CD4-positive, alpha-beta memory T cell (primary cell): ENCODE measurements at regions of chr1 and their contacts with region 1.

Region 1: GRCh38 chr1:152459596-152460528 is 45.8 kb upstream of the CRNN start:
- DNase-seq: peak; percentile 70 to 72 (median 71)
- H3K4me3 ChIP-seq: peak overlapping the region in 1 of 2 donors; percentile 9
- H3K4me3 Mint-ChIP-seq: peak overlapping the region; percentile 61 to 88 (median 80)
- H3K27ac ChIP-seq: peak overlapping the region; percentile 39
- H3K27ac Mint-ChIP-seq: peak overlapping the region; percentile 49 to 97 (median 87)
- H3K4me1 ChIP-seq: peaks cover 15% of the 10 kb centered on the region
- H3K4me1 Mint-ChIP-seq: peaks cover 24 to 36% (median 30%) of the 10 kb centered on the region in 4 donors
- H3K27me3 ChIP-seq: no peaks in the 10 kb centered on the region
- H3K27me3 Mint-ChIP-seq: peaks cover 2 to 4% of the 10 kb centered on the region in 2 donors

Region 2: DNA sequence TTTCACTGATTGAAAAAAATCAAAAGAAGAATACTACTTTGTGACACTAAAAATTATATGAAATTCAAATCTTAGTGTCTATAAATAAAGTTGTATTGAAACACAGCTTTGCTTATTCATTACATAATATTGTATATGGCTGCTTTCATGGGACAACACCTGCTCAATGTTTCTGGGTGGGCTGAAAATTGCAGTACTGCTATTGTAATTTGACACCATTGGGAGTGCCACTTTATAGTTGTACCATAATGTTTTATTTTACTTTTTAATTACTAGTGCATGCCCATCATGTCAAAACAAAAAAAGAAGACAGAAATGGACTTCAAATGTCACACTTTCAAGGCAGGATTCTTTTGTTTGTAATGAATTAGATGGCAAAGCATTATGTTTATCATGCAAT is 284.3 kb before region 1 on chr1:
- CTCF ChIA-PET with region 1: interaction called, 29 read pairs
- POLR2A ChIA-PET with region 1: no interaction called
- intact Hi-C with region 1: no loop called
- DNase-seq: no peak
- H3K4me3 ChIP-seq: no peak overlapping the region
- H3K4me3 Mint-ChIP-seq: no peak overlapping the region
- H3K27ac ChIP-seq: no peak overlapping the region
- H3K27ac Mint-ChIP-seq: no peak overlapping the region
- H3K4me1 ChIP-seq: no peaks in the 10 kb centered on the region
- H3K4me1 Mint-ChIP-seq: no peaks in the 10 kb centered on the region
- H3K27me3 ChIP-seq: no peaks in the 10 kb centered on the region
- H3K27me3 Mint-ChIP-seq: peaks cover 9 to 12% of the 10 kb centered on the region in 2 donors

Region 3: DNA sequence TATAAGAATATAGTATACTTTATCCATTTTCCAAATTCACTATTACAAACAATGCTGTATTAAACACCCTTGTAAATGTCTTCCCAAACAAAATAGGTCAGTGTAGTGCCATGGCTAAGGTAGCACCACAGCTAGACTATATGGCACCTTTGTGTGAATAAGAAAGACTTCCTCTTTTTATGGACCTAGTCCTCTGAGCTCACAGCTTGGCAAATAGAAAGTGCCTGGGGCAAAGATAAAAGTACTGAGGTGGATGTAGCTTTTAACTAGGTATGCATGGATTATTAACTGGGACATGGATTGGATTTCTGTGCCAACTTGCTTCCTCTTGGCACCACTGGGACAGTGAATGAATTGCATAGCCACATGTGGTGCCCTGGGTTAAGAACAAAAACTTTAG is 260.9 kb before region 1 on chr1:
- CTCF ChIA-PET with region 1: interaction called, 13 read pairs
- POLR2A ChIA-PET with region 1: no interaction called
- intact Hi-C with region 1: no loop called
- DNase-seq: no peak
- H3K4me3 ChIP-seq: no peak overlapping the region
- H3K4me3 Mint-ChIP-seq: no peak overlapping the region
- H3K27ac ChIP-seq: no peak overlapping the region
- H3K27ac Mint-ChIP-seq: no peak overlapping the region
- H3K4me1 ChIP-seq: no peaks in the 10 kb centered on the region
- H3K4me1 Mint-ChIP-seq: no peaks in the 10 kb centered on the region
- H3K27me3 ChIP-seq: no peaks in the 10 kb centered on the region
- H3K27me3 Mint-ChIP-seq: peaks cover 9 to 19% of the 10 kb centered on the region in 2 donors

Region 4: GRCh38 chr1:152398812-152399698 is 60.8 kb before region 1 on chr1:
- CTCF ChIA-PET with region 1: interaction called, 89 read pairs
- POLR2A ChIA-PET with region 1: interaction called, 11 read pairs
- intact Hi-C with region 1: loop called (anchors 5 kb)
- DNase-seq: peak in 4 of 5 donors; percentile 13 to 30 (median 16)
- H3K4me3 ChIP-seq: no peak overlapping the region
- H3K4me3 Mint-ChIP-seq: peak overlapping the region in 1 of 8 donors; percentile 43
- H3K27ac ChIP-seq: no peak overlapping the region
- H3K27ac Mint-ChIP-seq: peak overlapping the region in 3 of 7 donors; percentile 1 to 69 (median 5)
- H3K4me1 ChIP-seq: peaks cover 16% of the 10 kb centered on the region
- H3K4me1 Mint-ChIP-seq: peaks cover 14 to 24% (median 22%) of the 10 kb centered on the region in 4 donors
- H3K27me3 ChIP-seq: no peaks in the 10 kb centered on the region
- H3K27me3 Mint-ChIP-seq: peaks cover 3 to 6% of the 10 kb centered on the region in 2 donors

Region 5: GRCh38 chr1:152473887-152474537 is 14.2 kb after region 1 on chr1:
- CTCF ChIA-PET with region 1: interaction called, 22 read pairs
- POLR2A ChIA-PET with region 1: interaction called, 3 read pairs
- intact Hi-C with region 1: no loop called
- DNase-seq: no peak
- H3K4me3 ChIP-seq: no peak overlapping the region
- H3K4me3 Mint-ChIP-seq: no peak overlapping the region
- H3K27ac ChIP-seq: no peak overlapping the region
- H3K27ac Mint-ChIP-seq: no peak overlapping the region
- H3K4me1 ChIP-seq: no peaks in the 10 kb centered on the region
- H3K4me1 Mint-ChIP-seq: peaks cover 0 to 4% (median 0%) of the 10 kb centered on the region in 4 donors
- H3K27me3 ChIP-seq: no peaks in the 10 kb centered on the region
- H3K27me3 Mint-ChIP-seq: peaks cover 5 to 6% of the 10 kb centered on the region in 2 donors

Region 6: DNA sequence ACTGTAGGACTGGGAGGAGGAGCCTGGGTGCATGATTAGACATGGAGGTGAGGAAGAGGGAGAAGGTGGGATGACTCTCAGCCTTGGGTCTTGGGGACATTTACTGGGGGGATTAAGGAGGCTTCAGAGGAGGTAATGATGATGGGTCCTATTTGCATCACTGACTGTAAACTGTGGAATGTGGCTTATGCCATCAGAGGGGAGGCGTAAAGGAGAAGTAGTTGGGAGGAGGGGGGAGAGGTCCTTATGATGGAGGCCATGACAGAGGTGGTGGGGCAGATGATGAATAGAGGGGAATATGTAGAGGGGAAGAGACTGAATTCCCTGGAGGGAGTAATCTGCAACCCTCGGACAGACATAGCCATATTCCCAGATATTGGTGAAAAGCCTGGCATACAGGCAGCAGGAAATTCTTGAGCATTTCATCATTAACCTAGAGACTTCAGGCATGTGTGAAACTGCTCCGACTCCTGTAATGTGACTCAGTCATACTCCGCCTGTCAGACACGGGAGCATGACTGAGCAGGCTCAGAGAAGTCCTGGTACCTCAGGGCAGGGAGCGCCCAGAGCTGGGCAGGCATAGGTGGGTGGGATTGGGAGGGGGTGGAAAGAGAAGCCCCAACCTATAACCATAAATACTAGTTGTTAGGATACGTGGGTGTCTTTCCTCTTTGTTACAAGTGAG is 42.8 kb after region 1 on chr1:
- CTCF ChIA-PET with region 1: no interaction called
- POLR2A ChIA-PET with region 1: no interaction called
- intact Hi-C with region 1: no loop called
- DNase-seq: no peak
- H3K4me3 ChIP-seq: no peak overlapping the region
- H3K4me3 Mint-ChIP-seq: no peak overlapping the region
- H3K27ac ChIP-seq: no peak overlapping the region
- H3K27ac Mint-ChIP-seq: no peak overlapping the region
- H3K4me1 ChIP-seq: no peaks in the 10 kb centered on the region
- H3K4me1 Mint-ChIP-seq: no peaks in the 10 kb centered on the region
- H3K27me3 ChIP-seq: no peaks in the 10 kb centered on the region
- H3K27me3 Mint-ChIP-seq: peaks cover 8 to 13% of the 10 kb centered on the region in 2 donors